ENCODE measurements at regions of chr12 and their contacts with region 1.

Region 1: DNA sequence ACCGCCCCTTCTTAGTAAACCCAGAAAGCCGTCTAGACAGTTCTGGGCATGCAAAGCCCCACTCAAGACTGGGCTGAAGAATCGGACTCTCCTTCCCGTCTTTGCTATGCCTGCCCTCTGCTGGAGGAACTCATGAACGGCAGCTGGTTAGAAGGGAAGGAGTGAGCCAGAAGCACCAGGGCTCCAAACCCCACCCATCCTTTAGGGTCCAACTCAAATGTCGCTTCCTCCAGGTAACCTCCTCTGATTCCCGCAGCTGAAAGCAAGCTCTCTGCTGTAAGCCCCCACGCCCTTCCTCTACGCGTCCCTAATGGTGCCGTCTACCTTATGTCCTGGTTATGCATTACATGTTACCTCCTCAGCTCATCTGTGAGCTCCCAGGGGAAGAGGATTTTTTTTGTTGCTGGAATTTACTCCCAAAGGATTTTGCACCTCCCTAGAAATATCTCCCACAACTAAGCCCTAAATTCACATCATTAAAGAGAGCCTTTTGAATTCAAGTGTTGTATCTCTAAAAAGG is 59.0 kb upstream of the SCN8A start:
- DNase-seq: peak; percentile 76
- ATAC-seq: peak; percentile 95
- H3K4me3 ChIP-seq: no peak overlapping the region
- H3K27ac ChIP-seq: no peak overlapping the region
- H3K4me1 ChIP-seq: peaks cover 4% of the 10 kb centered on the region
- H3K27me3 ChIP-seq: peaks cover 5% of the 10 kb centered on the region
- CTCF ChIP-seq: peak; percentile 90

Region 2: GRCh38 chr12:51424662-51425438 is 107.2 kb before region 1 on chr12 and contains the start of gene SLC4A8:
- intact Hi-C with region 1: loop called (anchors 10 kb)
- DNase-seq: peak; percentile 85
- ATAC-seq: peak; percentile 90
- H3K4me3 ChIP-seq: peak within 1 kb of the TSS; percentile 39
- H3K27ac ChIP-seq: no peak within 1 kb of the TSS
- H3K4me1 ChIP-seq: no peaks in the 10 kb centered on the region
- H3K27me3 ChIP-seq: peaks cover 26% of the 10 kb centered on the region
- CTCF ChIP-seq: peak; percentile 67
- total RNA-seq, gene SLC4A8: 2.5 TPM

Region 3: DNA sequence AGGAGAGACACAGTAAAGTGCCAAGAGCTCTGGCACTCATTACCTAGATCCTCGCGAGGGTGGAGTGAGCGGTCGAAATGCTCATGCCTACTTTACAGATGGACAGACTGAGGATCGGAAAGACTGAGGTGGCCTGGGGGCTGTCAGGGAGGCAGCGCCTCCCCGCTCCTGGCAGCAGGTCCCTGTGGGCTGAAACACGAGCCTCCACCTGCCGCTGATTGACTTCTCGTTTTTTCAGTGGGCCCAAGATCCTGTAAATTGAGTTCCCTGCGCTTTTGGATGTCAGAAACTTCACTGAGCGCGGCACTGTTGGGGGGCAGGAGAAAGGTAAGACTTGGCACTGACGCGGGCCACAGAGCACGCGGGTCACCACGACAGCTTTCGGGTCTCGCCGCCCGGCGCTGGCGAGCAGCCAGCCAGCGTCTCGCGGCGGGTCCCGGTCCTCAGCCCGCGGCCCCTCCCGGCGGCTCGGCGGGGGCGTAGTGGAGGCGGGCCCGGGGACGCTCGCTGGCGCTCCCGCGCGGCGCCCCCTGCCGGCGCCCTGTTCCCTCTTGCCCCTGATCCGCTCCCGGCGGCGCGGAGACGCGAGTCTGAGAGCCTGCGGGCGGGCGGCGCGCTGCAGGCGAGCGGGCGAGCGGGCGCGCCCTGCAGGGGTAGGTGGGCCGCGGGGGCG is 58.4 kb after region 1 on chr12:
- intact Hi-C with region 1: no loop called
- DNase-seq: peak; percentile 83
- ATAC-seq: peak; percentile 93
- H3K4me3 ChIP-seq: peak overlapping the region; percentile 39
- H3K27ac ChIP-seq: no peak overlapping the region
- H3K4me1 ChIP-seq: peaks cover 8% of the 10 kb centered on the region
- H3K27me3 ChIP-seq: peaks cover 22% of the 10 kb centered on the region
- CTCF ChIP-seq: peak; percentile 45

Measured in upper lobe of right lung (tissue), 1 donor.